ENCODE measurements at regions of chr17 and their contacts with region 1.

Region 1: DNA sequence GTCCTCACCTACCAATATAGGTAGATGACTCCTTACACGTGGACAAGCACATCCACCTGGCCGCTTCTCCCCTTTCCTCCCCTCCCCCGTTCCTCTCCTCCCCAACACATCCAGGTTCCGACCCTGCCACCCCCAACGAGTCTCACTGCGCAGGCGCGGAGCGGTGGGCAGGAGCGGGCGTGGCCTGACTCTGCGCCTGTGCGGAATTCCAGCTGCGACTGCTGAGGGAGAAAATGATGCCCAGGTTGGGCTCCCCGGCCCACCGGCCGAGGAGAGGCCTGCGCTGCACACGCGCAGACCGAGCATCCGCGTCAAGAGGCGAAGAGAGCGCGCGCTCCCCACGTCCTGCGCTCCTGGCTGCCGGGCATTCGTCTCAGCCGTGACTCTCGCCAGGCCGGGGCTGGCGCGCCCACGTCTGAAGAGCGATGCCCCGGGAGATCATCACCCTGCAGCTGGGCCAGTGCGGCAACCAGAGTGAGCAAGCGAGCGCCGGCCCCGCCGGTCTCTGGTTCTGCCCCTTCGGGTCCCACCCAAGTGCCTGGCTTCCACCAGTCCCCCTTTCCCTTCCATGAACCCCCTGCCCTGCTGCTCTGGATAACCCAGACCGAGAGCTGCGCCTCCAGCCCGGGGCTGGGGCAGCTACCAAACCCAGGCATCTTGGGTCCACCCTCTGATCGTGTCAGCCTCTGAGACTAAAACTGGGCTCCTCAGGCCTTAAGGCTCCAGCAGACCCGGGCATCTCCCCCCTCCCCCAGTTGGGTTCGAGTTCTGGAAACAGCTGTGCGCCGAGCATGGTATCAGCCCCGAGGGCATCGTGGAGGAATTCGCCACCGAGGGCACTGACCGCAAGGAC is at the start of gene TUBG2:
- DNase-seq: peak; percentile 92
- ATAC-seq: peak; percentile 92
- H3K4me3 ChIP-seq: peak within 1 kb of the TSS; percentile 76 to 94 (median 93)
- H3K27ac ChIP-seq: peak within 1 kb of the TSS; percentile 82
- H3K4me1 ChIP-seq: peaks cover 47% of the 10 kb centered on the region
- H3K27me3 ChIP-seq: no peaks in the 10 kb centered on the region; a peak in 1 of 5 replicates
- CTCF ChIP-seq: no peak; the same call in 1 of the 2 replicates
- EP300 ChIP-seq: no peak
- POLR2A ChIP-seq: peak; percentile 74 to 93
- RAD21 ChIP-seq: no peak; the same call in 1 of the 2 replicates
- total RNA-seq, gene TUBG2: 6.6 and 16.0 TPM in 2 replicates

Region 2: DNA sequence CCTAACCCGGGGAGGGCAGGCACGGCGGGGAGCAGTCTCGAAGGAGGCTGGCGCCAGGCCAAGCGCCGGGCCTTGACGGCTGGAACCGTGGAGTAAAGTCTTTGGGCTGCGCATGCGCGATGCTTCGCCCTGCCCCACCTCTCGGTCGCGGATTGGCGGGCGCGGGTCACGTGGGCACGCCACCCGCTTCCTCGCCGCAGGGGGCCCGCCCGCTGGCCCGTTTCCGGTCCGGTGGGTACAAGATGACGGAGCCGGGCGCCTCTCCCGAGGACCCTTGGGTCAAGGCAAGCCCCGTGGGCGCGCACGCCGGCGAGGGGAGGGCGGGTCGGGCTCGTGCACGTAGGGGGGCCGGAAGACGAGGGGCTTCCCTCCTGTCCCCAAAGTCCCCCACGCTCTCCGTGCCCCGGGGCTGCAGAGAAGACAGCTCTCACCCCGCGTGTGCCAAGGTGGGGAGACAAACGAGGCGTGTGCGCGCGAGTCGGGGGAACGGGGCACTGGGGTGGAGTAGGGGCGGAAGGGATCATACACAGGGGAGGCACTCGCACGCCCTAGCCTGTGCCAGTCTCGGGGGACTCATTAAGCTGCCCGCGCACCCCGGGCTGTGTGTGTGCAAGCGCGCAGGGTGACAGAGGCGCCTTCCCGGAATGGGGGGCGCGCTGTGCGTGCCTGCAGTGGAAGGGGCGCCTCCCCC is 92.3 kb before region 1 on chr17 and contains the start of gene MLX:
- CTCF ChIA-PET with region 1: no interaction called
- POLR2A ChIA-PET with region 1: interaction called, 11 read pairs
- in situ Hi-C with region 1: no loop called
- intact Hi-C with region 1: no loop called
- DNase-seq: peak; percentile 91
- ATAC-seq: peak; percentile 64
- H3K4me3 ChIP-seq: peak within 1 kb of the TSS; percentile 67 to 93 (median 91)
- H3K27ac ChIP-seq: peak within 1 kb of the TSS; percentile 91
- H3K4me1 ChIP-seq: peaks cover 72% of the 10 kb centered on the region
- H3K27me3 ChIP-seq: no peaks in the 10 kb centered on the region; a peak in 1 of 5 replicates
- CTCF ChIP-seq: peak; percentile 48
- EP300 ChIP-seq: no peak; a peak in 2 of 4 replicates
- POLR2A ChIP-seq: peak in 1 of 2 experiments; percentile 60; a peak in 2 of 4 replicates
- RAD21 ChIP-seq: peak; percentile 44
- total RNA-seq, gene MLX: 38.9 and 40.2 TPM in 2 replicates

Region 3: GRCh38 chr17:42609182-42609813 is 50.0 kb before region 1 on chr17 and contains the starts of genes RETREG3 and TUBG1:
- CTCF ChIA-PET with region 1: no interaction called
- POLR2A ChIA-PET with region 1: interaction called, 26 read pairs
- in situ Hi-C with region 1: no loop called
- intact Hi-C with region 1: no loop called
- DNase-seq: peak; percentile 99
- ATAC-seq: peak; percentile 89
- H3K4me3 ChIP-seq: peak within 1 kb of the TSS; percentile 75 to 94 (median 91)
- H3K27ac ChIP-seq: peak within 1 kb of the TSS; percentile 89
- H3K4me1 ChIP-seq: peaks cover 59% of the 10 kb centered on the region
- H3K27me3 ChIP-seq: no peaks in the 10 kb centered on the region; a peak in 1 of 5 replicates
- CTCF ChIP-seq: peak; percentile 45
- EP300 ChIP-seq: no peak
- POLR2A ChIP-seq: peak; percentile 93 to 95
- RAD21 ChIP-seq: peak; percentile 81
- total RNA-seq, gene RETREG3: 38.2 and 55.8 TPM in 2 replicates
- total RNA-seq, gene TUBG1: 137 TPM in 2 replicates

Region 4: GRCh38 chr17:42618442-42619150 is 40.7 kb before region 1 on chr17:
- CTCF ChIA-PET with region 1: no interaction called
- POLR2A ChIA-PET with region 1: interaction called, 16 read pairs
- in situ Hi-C with region 1: no loop called
- intact Hi-C with region 1: loop called (anchors 5 kb)
- DNase-seq: peak; percentile 82
- ATAC-seq: peak; percentile 94
- H3K4me3 ChIP-seq: peak overlapping the region in 2 of 3 experiments; percentile 23 to 37; a peak in 3 of 6 replicates
- H3K27ac ChIP-seq: peak overlapping the region; percentile 24
- H3K4me1 ChIP-seq: peaks cover 35% of the 10 kb centered on the region
- H3K27me3 ChIP-seq: no peaks in the 10 kb centered on the region
- CTCF ChIP-seq: peak; percentile 90
- EP300 ChIP-seq: no peak
- POLR2A ChIP-seq: no peak; a peak in 2 of 4 replicates
- RAD21 ChIP-seq: peak; percentile 81

Region 5: GRCh38 chr17:42677008-42677857 is 17.9 kb after region 1 on chr17:
- CTCF ChIA-PET with region 1: no interaction called
- POLR2A ChIA-PET with region 1: interaction called, 65 read pairs
- in situ Hi-C with region 1: no loop called
- intact Hi-C with region 1: no loop called
- DNase-seq: peak; percentile 99
- ATAC-seq: peak; percentile 64
- H3K4me3 ChIP-seq: peak overlapping the region; percentile 76 to 99 (median 83)
- H3K27ac ChIP-seq: peak overlapping the region; percentile 92
- H3K4me1 ChIP-seq: peaks cover 51% of the 10 kb centered on the region
- H3K27me3 ChIP-seq: no peaks in the 10 kb centered on the region
- CTCF ChIP-seq: no peak
- EP300 ChIP-seq: peak in 1 of 2 experiments; percentile 54; a peak in 1 of 4 replicates
- POLR2A ChIP-seq: no peak; a peak in 1 of 4 replicates
- RAD21 ChIP-seq: no peak